ENCODE measurements at regions of chr11 and their contacts with region 1.

Region 1: DNA sequence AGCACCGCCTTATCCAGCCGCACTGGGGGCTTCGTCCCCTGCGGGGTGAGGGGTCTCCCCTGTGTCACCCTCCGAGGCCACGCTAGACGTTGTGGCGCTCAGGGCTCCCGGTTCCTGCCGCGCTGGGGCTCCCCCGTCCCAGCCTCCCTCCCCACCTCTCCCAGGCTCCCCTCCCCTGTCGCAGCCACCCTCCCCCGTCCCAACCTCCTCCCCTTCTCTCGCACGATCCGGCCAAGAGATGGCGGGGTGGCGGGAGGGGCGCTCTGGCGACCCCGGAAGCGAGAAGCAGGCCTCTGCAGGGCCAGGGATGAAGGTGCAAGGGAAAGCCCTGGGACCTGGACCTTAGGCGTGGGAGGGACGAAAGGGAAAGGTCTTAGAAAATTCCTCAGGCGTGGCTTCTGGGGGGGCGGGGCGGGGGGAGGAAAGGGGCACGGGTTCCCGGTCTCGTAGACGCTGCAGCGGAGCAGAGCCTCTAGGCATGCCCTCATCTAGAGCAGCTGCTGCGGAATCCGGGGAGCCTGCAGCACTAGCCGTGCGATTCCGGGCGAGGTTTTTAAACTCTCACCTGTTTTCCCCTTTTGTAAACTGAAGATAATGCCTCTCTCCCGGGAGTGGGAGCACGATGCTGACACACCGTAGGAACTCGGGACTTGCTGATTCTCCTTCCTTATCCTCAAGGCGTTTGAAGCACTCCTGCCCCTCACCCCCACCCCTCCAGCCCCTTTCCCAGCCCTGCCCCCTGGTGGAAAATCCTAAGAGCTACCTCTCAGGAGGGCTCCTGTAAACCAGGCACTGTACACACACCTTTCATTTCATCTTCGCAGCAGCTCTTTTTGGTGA is 14.4 kb downstream of the KCNJ5 start:
- DNase-seq: no peak

Region 2: GRCh38 chr11:128890543-128891368 is 14.8 kb before region 1 on chr11 and contains the start of gene KCNJ5:
- intact Hi-C with region 1: loop called (anchors 2 kb)
- DNase-seq: no peak
- total RNA-seq, gene KCNJ5: 12.1 TPM